ENCODE measurements at regions of chr10 and their contacts with region 1.

Region 1: DNA sequence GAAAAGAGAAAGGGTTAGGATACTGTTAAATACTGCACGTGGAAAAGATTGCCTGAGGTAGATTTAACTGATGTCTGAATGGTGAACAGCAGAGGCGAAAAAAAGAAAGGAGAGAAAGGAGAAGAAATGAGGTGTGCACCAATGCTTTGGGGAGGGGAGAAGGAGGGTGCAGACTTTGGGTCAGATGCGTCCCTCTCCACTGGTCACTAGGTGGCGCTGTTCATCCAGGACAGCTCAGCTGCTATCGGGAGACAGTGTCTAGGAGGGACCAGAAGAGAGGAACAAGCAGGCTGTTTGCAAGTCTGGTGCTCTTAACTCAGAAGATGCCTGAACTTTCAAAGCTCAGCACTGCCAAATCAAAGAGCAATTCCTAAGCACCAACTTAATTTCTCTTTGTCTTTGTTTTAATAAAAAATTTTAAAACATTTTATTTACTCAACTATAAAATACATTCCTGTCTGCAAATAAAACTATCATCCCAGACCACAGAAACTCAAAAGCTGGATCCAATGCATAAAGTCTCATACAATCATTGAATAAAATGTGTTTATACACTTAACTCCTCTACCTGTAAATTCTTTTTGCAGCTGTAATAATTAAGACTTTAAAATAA is 83.9 kb upstream of the PDLIM1 start:
- DNase-seq: peak; percentile 71
- CTCF ChIP-seq: peak; percentile 96

Region 2: GRCh38 chr10:95391581-95392216 is 17.0 kb after region 1 on chr10:
- CTCF ChIA-PET with region 1: interaction called, 87 read pairs
- POLR2A ChIA-PET with region 1: no interaction called
- DNase-seq: no peak
- CTCF ChIP-seq: no peak

Region 3: GRCh38 chr10:95422233-95422632 is 47.5 kb after region 1 on chr10:
- CTCF ChIA-PET with region 1: interaction called, 15 read pairs
- POLR2A ChIA-PET with region 1: no interaction called
- DNase-seq: no peak
- CTCF ChIP-seq: no peak

Region 4: DNA sequence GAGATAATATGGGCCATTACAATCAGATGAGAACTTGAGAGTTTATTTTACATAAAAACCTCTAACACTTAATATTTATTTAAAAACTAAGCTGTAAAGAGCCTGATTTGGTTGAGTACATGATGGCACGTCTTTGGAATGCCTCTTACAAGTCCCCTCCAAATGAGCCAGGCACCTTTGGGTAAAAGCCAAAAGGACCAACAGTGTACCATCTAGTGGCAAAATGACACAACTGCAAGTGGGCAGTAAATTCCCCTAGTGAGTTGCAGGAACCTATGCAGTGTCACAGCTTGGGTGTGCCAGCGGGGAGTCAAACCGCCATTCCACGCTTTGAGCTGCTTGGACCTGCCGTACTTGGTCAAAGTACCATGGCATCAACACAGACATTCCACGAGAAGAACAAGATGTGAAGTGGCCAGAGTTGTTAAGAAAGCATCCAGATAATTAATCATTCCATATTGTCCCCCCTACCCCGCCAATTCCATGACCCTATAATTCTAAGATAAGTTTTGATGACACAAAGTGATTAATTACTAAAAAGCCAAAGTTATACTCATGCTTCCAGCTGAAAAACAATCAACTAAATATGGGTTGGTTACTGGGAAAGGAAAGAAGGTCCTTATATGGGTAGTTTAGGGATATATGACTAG is 71.3 kb after region 1 on chr10:
- CTCF ChIA-PET with region 1: interaction called, 67 read pairs
- POLR2A ChIA-PET with region 1: no interaction called
- DNase-seq: peak; percentile 73
- CTCF ChIP-seq: peak; percentile 86

Measured in GM10248 (cell line).